ENCODE measurements at regions of chr2 and their contacts with region 1.

Region 1: DNA sequence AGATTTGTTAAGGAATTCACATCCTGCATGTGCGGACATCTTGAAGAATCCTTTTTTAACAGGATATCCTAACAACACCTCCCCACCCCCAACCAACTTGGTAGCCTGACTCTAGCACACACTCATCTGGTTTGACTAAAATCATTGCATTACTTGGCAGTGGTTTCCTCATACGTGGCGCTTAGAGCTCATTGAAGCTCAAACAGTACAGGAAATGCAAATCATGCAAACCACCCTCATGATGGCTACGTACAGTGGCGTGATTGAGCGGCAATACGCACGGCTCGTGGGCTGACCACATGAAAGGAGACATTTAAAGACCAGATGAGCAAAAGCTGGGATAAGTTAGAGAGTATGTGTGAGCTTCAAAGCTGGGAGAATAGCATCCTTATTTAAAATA is 336.2 kb downstream of the ZEB2 start:
- DNase-seq: peak; percentile 89
- ATAC-seq: peak; percentile 100
- H3K4me3 Mint-ChIP-seq: peak overlapping the region; percentile 52
- H3K27ac Mint-ChIP-seq: peak overlapping the region; percentile 86
- H3K4me1 Mint-ChIP-seq: peaks cover 40% of the 10 kb centered on the region
- H3K27me3 Mint-ChIP-seq: no peaks in the 10 kb centered on the region

Region 2: GRCh38 chr2:144128130-144128746 is 55.5 kb before region 1 on chr2:
- CTCF ChIA-PET with region 1: no interaction called
- POLR2A ChIA-PET with region 1: no interaction called
- intact Hi-C with region 1: loop called in 1 of 2 experiments (anchors 5 kb)
- DNase-seq: no peak
- ATAC-seq: peak; percentile 70
- H3K4me3 Mint-ChIP-seq: no peak overlapping the region
- H3K27ac Mint-ChIP-seq: peak overlapping the region; percentile 44
- H3K4me1 Mint-ChIP-seq: peaks cover 24% of the 10 kb centered on the region
- H3K27me3 Mint-ChIP-seq: no peaks in the 10 kb centered on the region

Region 3: DNA sequence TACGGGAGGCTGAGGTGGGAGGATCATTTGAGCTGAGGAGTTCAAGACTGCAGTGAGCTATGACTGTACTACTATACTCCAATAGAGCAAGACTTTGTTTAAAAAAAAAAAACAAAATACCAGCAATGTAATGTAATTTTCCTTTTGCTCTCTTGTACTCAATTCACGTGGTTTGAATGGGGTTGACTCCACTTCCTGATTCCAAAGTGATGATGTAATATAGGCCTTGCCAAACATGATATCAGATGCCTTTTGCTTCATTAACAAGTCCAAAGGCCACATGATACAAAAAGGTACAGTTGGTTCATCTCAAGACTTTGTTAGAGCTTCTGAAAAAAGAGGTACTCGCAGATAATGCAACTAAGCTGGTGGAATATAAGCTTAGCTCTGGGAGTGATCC is 14.4 kb after region 1 on chr2:
- CTCF ChIA-PET with region 1: interaction called, 14 read pairs
- POLR2A ChIA-PET with region 1: interaction called, 4 read pairs
- intact Hi-C with region 1: loop called in 1 of 2 experiments (anchors 1 kb)
- DNase-seq: peak; percentile 16
- ATAC-seq: peak; percentile 17
- H3K4me3 Mint-ChIP-seq: no peak overlapping the region
- H3K27ac Mint-ChIP-seq: peak overlapping the region; percentile 87
- H3K4me1 Mint-ChIP-seq: peaks cover 64% of the 10 kb centered on the region
- H3K27me3 Mint-ChIP-seq: no peaks in the 10 kb centered on the region

Region 4: GRCh38 chr2:144332356-144333142 is 148.8 kb after region 1 on chr2:
- CTCF ChIA-PET with region 1: no interaction called
- POLR2A ChIA-PET with region 1: no interaction called
- intact Hi-C with region 1: loop called in 1 of 2 experiments (anchors 2 kb)
- DNase-seq: peak; percentile 94
- ATAC-seq: peak; percentile 88
- H3K4me3 Mint-ChIP-seq: peak overlapping the region; percentile 93
- H3K27ac Mint-ChIP-seq: peak overlapping the region; percentile 88
- H3K4me1 Mint-ChIP-seq: peaks cover 32% of the 10 kb centered on the region
- H3K27me3 Mint-ChIP-seq: peaks cover 2% of the 10 kb centered on the region

Region 5: GRCh38 chr2:144572977-144573376 is 389.2 kb after region 1 on chr2:
- CTCF ChIA-PET with region 1: no interaction called
- POLR2A ChIA-PET with region 1: no interaction called
- intact Hi-C with region 1: loop called in 1 of 2 experiments (anchors 5 kb)
- DNase-seq: no peak
- ATAC-seq: peak; percentile 75
- H3K4me3 Mint-ChIP-seq: no peak overlapping the region
- H3K27ac Mint-ChIP-seq: no peak overlapping the region
- H3K4me1 Mint-ChIP-seq: peaks cover 25% of the 10 kb centered on the region
- H3K27me3 Mint-ChIP-seq: peaks cover 11% of the 10 kb centered on the region

Measured in activated CD4-positive, alpha-beta T cell treated with anti-CD3 and anti-CD28 coated beads for 36 hours (primary cell).